ENCODE measurements at regions of chr19 and their contacts with region 1.

Region 1: DNA sequence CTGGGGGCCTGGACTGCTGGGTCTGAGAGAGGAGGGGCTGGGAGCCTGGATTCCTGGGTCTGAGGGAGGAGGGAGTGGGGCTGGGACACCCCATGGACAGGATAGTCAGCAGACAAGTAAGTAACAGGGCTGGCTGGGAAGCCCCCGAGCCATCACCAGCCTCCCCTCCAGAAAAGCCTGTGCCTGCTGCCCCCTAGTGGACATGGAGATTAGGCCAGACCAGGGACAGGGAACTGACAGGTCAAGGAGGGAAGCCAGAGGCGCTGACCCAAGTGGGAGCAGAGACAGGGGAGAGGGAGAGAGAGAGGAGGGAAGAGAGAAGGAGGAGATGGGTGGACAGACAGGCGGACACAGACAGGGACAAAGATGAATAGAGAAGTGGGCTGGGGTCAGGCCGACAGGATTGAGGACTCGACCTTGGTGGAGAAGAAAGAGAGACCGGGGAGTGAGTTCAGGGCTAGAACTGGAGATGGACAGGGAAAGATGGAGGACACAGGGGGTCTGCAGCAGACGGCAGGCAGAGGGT is 6.7 kb upstream of the ERFL start:
- DNase-seq: peak; percentile 89
- ATAC-seq: peak; percentile 77
- H3K4me3 Mint-ChIP-seq: no peak overlapping the region
- H3K27ac Mint-ChIP-seq: peak overlapping the region; percentile 57
- H3K4me1 Mint-ChIP-seq: peaks cover 38% of the 10 kb centered on the region
- H3K27me3 Mint-ChIP-seq: peaks cover 2% of the 10 kb centered on the region

Region 2: GRCh38 chr19:41951686-41952172 is 16.8 kb after region 1 on chr19:
- CTCF ChIA-PET with region 1: interaction called, 7 read pairs
- POLR2A ChIA-PET with region 1: no interaction called
- intact Hi-C with region 1: loop called (anchors 1 to 2 kb)
- DNase-seq: peak; percentile 94
- ATAC-seq: peak; percentile 90
- H3K4me3 Mint-ChIP-seq: no peak overlapping the region
- H3K27ac Mint-ChIP-seq: peak overlapping the region; percentile 7
- H3K4me1 Mint-ChIP-seq: peaks cover 15% of the 10 kb centered on the region
- H3K27me3 Mint-ChIP-seq: no peaks in the 10 kb centered on the region

Measured in activated CD4-positive, alpha-beta T cell treated with anti-CD3 and anti-CD28 coated beads for 36 hours (primary cell).